Motor neuron (in vitro differentiated cells): ENCODE measurements at regions of chr19 and their contacts with region 1.

Region 1: GRCh38 chr19:41439441-41440222 is at the start of gene DMAC2:
- ATAC-seq: peak; percentile 98 to 99 (median 99)
- H3K4me3 ChIP-seq: peak within 1 kb of the TSS; percentile 78 to 99 (median 92)
- H3K27ac ChIP-seq: peak within 1 kb of the TSS; percentile 94
- H3K4me1 ChIP-seq: peaks cover 5 to 8% of the 10 kb centered on the region in 2 donors
- total RNA-seq, gene DMAC2: 26.5 to 47.4 (median 33.7) TPM

Region 2: DNA sequence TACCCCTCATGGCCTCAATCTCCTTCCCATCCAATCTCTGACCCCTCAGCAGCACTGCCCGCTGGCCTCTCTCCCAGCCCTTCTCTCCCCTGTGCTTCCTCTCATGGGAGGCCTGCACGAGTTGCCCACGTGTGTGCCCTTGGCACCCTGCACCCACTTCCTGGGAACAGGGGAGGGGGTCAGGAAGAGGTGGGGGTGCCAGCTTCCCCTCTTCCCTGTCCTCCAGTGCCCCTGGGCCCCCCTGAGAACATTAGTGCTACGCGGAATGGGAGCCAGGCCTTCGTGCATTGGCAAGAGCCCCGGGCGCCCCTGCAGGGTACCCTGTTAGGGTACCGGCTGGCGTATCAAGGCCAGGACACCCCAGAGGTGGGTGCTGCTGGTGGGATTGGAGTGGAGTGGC is 201.4 kb before region 1 on chr19:
- in situ Hi-C with region 1: no loop called
- ATAC-seq: no peak
- H3K4me3 ChIP-seq: no peak overlapping the region
- H3K27ac ChIP-seq: no peak overlapping the region
- H3K4me1 ChIP-seq: no peaks in the 10 kb centered on the region

Region 3: DNA sequence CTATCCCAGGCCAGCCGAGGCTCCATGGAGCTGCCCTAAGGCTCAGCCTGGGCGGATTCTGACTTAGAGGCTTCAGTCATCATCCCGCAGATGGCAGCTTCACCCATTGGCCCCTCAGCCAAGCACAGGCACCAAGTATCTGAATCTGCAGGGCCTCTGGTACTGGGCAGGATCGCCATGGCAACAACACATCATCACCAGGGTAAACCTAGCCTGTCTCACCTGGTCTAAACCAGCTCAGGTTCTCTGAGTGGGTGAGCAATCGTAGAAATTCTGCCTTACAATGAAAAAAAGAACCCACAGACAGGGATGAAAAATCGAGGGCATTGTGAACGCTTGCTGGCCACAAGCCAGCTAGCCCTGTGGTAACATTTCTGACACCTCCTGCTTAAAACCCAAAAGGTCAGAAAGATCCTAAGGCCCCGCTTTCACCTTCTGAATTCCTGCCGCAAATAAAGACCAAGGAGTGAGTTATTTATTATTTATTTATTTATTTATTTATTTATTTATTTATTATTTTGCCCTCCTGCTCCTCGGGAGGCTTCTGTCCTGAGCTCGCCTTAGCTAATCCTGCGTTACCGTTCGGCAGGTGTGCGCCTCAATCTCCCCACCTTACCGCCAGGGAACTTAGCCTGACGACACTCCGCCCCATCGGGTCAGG is 124.4 kb after region 1 on chr19:
- in situ Hi-C with region 1: loop called in 3 of 9 experiments (anchors 10 to 25 kb)
- ATAC-seq: peak in 4 of 8 experiments; percentile 8 to 70 (median 31)
- H3K4me3 ChIP-seq: no peak overlapping the region
- H3K27ac ChIP-seq: no peak overlapping the region
- H3K4me1 ChIP-seq: no peaks in the 10 kb centered on the region